Activated T-helper 2 cell treated with anti-CD3 and anti-CD28 coated beads, Interferon-gamma antibody, Interleukin-2, Interleukin-4, amounts not matched to agents 10 μg/mL and 5 μg/mL and 100 μg/mL, durations not matched to agents 14 hours and 24 hours and 36 hours (primary cell): ENCODE measurements at regions of chr6 and their contacts with region 1.

Region 1: GRCh38 chr6:145704143-145704781 is 31.1 kb downstream of the EPM2A start:
- DNase-seq: no peak
- H3K4me3 Mint-ChIP-seq: no peak overlapping the region
- H3K27ac Mint-ChIP-seq: no peak overlapping the region
- H3K4me1 Mint-ChIP-seq: peaks cover 15% of the 10 kb centered on the region
- H3K27me3 Mint-ChIP-seq: no peaks in the 10 kb centered on the region

Region 2: GRCh38 chr6:145648149-145648548 is 56.1 kb before region 1 on chr6:
- intact Hi-C with region 1: no loop called
- DNase-seq: no peak
- H3K4me3 Mint-ChIP-seq: no peak overlapping the region
- H3K27ac Mint-ChIP-seq: no peak overlapping the region
- H3K4me1 Mint-ChIP-seq: no peaks in the 10 kb centered on the region
- H3K27me3 Mint-ChIP-seq: no peaks in the 10 kb centered on the region

Region 3: DNA sequence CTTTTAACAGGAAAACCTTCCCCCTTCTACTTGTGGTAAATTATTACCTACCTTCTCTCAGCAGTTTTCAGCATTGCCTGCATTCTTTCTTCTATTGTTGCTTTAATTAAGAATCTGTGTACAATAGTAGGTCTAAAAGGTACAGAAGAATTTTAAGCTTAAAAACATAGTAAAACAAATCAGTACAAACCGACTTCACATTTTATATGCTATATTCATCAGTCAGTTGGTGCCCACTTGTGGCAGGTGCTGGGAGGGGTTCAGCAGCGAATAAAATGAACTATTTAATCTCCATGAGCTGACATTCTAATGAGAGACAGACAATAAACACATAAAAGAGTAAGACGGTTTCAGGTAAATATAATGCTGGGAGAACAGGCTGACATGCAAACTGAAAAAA is 183.7 kb after region 1 on chr6:
- intact Hi-C with region 1: loop called (anchors 1 kb)
- DNase-seq: no peak
- H3K4me3 Mint-ChIP-seq: no peak overlapping the region
- H3K27ac Mint-ChIP-seq: no peak overlapping the region
- H3K4me1 Mint-ChIP-seq: no peaks in the 10 kb centered on the region
- H3K27me3 Mint-ChIP-seq: no peaks in the 10 kb centered on the region